Activated CD4-positive, alpha-beta T cell treated with anti-CD3 and anti-CD28 coated beads, Interleukin-2, amount 10 ng/mL, durations not matched to agents 24 days and 14 days (primary cell): ENCODE measurements at regions of chr12 and their contacts with region 1.

Region 1: GRCh38 chr12:39619660-39620433 is at the start of gene ABCD2:
- DNase-seq: peak; percentile 93
- H3K4me3 Mint-ChIP-seq: no peak within 1 kb of the TSS
- H3K27ac Mint-ChIP-seq: no peak within 1 kb of the TSS
- H3K4me1 Mint-ChIP-seq: peaks cover 30% of the 10 kb centered on the region
- H3K27me3 Mint-ChIP-seq: no peaks in the 10 kb centered on the region
- total RNA-seq, gene ABCD2: 7.0 and 7.4 TPM in 2 replicates

Region 2: GRCh38 chr12:39319187-39319586 is 300.7 kb before region 1 on chr12:
- intact Hi-C with region 1: loop called (anchors 10 kb)
- DNase-seq: no peak
- H3K4me3 Mint-ChIP-seq: no peak overlapping the region
- H3K27ac Mint-ChIP-seq: no peak overlapping the region
- H3K4me1 Mint-ChIP-seq: no peaks in the 10 kb centered on the region
- H3K27me3 Mint-ChIP-seq: no peaks in the 10 kb centered on the region

Region 3: DNA sequence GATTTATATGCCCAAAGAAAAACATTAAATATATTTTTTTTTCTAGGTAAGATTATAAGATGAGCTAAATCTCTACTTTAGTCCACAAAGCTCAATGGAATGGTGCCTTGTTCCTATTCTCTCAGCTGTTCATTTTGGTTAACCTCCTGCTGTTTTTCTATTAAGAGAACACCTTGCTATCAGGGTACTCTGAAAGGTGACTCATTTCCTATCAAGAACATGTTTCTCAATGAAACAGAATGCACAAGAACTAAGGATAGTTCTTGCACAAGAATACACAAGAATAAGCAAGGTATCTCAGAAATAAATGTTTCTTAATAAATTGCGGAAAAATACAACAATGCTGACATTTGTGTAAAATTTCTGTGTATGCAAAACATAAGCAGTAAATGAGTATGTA is 14.3 kb before region 1 on chr12:
- intact Hi-C with region 1: loop called (anchors 2 kb)
- DNase-seq: no peak
- H3K4me3 Mint-ChIP-seq: no peak overlapping the region
- H3K27ac Mint-ChIP-seq: peak overlapping the region; percentile 20
- H3K4me1 Mint-ChIP-seq: peaks cover 33% of the 10 kb centered on the region
- H3K27me3 Mint-ChIP-seq: no peaks in the 10 kb centered on the region

Region 4: GRCh38 chr12:40107098-40107802 is 487.4 kb after region 1 on chr12:
- intact Hi-C with region 1: loop called (anchors 2 kb)
- DNase-seq: peak; percentile 95
- H3K4me3 Mint-ChIP-seq: peak overlapping the region; percentile 63
- H3K27ac Mint-ChIP-seq: no peak overlapping the region
- H3K4me1 Mint-ChIP-seq: peaks cover 31% of the 10 kb centered on the region
- H3K27me3 Mint-ChIP-seq: peaks cover 30% of the 10 kb centered on the region